Activated CD4-positive, alpha-beta memory T cell treated with anti-CD3 and anti-CD28 coated beads, Interleukin-2, amount 10 ng/mL, durations not matched to agents 7 days and 5 days (primary cell): ENCODE measurements at regions of chr15 and their contacts with region 1.

Region 1: DNA sequence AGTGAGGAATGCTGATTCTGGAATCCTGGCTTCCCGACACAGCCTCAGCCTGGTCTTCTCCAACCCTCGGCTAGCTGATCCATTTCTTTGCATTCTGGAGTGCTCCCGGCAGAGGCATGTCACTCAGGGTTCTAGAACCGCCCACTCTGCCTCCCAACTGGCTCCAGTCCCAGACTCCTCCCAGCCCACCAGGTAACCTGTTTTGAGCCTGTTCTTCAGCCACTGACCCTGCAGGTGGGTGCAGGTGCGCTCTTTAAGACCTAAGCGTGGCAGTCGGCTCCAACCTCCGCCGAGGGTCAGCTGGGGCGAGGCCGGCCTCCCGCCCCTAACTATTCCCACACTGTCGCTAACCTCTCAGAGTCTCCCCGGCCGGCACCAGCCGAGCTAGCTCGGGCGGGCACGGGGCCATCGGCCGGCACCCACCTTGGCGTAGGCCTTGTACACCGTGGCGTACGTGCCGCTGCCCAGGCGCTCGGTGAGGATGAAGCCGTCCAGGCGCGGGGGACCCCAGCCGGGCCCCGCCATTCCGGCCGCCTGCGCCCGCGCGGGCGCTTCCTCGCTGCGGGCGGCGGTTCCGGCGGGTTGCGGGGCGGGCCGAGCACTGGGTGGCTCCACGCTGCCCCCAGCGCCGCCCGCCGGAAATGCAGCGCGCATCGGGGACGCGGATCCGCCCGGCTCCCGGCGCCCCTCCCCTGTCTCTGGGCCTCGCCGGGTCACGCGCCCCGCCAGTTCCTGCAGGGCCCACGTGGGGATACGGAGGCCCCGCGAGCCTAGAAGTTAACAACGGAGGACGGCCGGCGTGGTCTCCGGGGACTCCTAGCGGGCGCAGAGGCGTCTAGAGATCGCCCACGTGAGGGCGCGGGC is at the start of gene ULK3:
- DNase-seq: peak; percentile 95
- H3K4me3 Mint-ChIP-seq: peak within 1 kb of the TSS; percentile 91
- H3K27ac Mint-ChIP-seq: peak within 1 kb of the TSS; percentile 98
- H3K4me1 Mint-ChIP-seq: peaks cover 63% of the 10 kb centered on the region
- H3K27me3 Mint-ChIP-seq: no peaks in the 10 kb centered on the region
- total RNA-seq, gene ULK3: 74.9 to 84.2 TPM

Region 2: DNA sequence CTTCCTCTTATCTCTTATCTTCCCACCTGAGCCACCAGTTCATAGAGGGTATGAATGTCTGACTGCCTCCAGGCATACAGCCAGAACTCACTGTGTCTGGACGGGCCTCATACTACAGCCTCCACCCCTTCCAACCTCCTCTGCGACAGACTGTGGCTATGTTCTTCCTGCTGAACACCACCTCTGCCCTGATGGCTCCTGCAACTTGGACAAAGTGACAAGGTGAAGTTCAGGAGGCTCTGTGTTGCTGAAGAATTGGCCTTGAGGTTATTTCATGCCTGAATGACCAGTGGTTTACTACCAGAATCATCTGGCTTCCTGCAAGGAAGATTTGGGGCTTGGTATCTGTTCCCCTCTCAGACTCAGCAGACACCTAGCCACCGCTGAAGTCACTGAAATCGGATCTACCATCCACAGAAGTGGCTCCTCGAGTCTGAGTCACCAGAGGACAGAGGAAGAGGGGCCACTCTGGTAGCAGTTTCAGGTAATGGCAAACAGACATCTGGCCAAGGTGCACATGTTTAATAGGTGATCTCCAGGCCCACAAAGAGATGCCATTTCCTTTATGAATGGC is 14.4 kb after region 1 on chr15:
- CTCF ChIA-PET with region 1: interaction called, 13 read pairs
- POLR2A ChIA-PET with region 1: interaction called, 4 read pairs
- DNase-seq: no peak
- H3K4me3 Mint-ChIP-seq: no peak overlapping the region
- H3K27ac Mint-ChIP-seq: peak overlapping the region; percentile 85
- H3K4me1 Mint-ChIP-seq: peaks cover 40% of the 10 kb centered on the region
- H3K27me3 Mint-ChIP-seq: no peaks in the 10 kb centered on the region

Region 3: DNA sequence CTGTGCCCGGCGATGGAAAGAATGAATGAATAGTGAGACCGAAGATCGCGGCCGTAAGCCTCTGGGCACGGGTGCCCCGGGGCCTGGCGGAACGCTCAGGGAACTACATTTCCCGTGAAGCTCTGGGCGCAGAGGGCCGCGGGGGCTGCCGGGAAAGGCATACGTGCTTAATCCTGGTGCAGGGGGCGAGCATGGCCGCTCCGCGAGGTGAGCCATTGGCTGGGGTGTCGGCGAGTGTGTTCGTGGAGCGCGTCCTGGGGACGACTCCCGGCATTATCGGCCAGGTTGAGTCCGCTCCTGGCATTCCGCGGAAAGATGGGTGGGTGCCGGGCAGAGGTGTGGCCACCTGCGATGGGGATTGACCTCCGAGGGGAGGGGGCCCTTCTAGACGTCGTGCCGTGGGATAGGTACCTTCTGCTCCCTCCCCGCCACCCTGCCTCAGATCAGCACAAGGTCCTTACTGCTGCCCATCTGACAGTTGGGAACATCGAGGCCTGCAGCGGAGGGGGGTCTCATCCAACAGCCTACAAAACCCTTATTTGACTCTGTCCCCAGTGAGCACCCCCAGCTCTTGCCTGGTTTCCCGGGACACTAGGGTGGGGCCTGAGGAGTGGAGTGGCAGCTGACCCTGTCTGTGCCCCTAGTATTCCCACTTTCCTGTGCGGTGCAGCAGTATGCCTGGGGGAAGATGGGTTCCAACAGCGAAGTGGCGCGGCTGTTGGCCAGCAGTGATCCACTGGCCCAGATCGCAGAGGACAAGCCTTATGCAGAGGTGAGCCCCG is 47.3 kb after region 1 on chr15 and contains the start of gene MPI:
- CTCF ChIA-PET with region 1: interaction called, 8 read pairs
- POLR2A ChIA-PET with region 1: interaction called, 41 read pairs
- DNase-seq: peak; percentile 89
- H3K4me3 Mint-ChIP-seq: peak within 1 kb of the TSS; percentile 84
- H3K27ac Mint-ChIP-seq: peak within 1 kb of the TSS; percentile 69
- H3K4me1 Mint-ChIP-seq: peaks cover 56% of the 10 kb centered on the region
- H3K27me3 Mint-ChIP-seq: no peaks in the 10 kb centered on the region
- total RNA-seq, gene MPI: 82.8 to 92.9 TPM